Activated CD4-positive, alpha-beta memory T cell treated with anti-CD3 and anti-CD28 coated beads for 36 hours (primary cell): ENCODE measurements at regions of chr17 and their contacts with region 1.

Region 1: DNA sequence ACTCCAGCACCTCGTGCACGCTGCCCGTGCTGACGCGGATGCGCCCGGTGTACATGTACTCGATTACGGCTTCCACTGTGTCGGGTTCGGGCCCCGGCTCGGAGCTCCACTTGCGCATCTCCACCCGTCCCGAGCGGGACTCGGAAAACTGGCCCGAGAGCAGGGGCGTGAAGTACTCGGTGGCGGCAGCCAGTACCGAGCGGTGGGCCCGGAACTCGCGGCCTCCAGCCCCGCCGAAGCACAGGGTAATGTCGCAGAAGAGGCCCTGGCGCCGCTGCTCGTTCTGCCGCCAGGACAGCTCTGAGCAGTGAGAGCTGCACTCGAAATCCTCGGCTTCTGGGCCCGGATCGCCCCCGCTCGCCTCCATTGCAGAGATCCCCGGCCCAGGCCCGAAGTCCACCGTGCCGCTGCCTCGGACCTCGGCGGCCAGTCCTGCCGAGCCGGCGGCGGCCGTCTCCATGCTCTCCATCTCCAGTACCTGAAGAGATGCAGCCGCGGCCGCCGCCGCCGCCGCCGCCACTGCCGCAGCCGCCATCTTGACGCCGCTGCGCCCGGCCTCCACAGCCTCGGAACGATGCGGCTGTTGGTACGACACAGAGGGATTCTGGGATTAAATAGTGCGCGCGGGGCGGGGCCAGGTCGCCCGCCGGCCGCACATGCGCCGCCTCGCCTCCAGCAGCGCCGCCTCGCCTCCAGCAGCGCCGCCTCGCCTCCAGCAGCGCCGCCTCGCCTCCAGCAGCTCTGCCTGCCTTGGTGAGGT is at the start of gene KLHL11:
- DNase-seq: peak; percentile 93
- H3K4me3 Mint-ChIP-seq: no peak within 1 kb of the TSS
- H3K27ac Mint-ChIP-seq: peak within 1 kb of the TSS; percentile 80
- H3K4me1 Mint-ChIP-seq: peaks cover 45% of the 10 kb centered on the region
- H3K27me3 Mint-ChIP-seq: no peaks in the 10 kb centered on the region
- total RNA-seq, gene KLHL11: 23.6 to 25.2 TPM

Region 2: GRCh38 chr17:41688699-41689496 is 176.1 kb before region 1 on chr17 and contains the start of gene EIF1:
- CTCF ChIA-PET with region 1: interaction called, 3 read pairs
- POLR2A ChIA-PET with region 1: interaction called, 11 read pairs
- intact Hi-C with region 1: no loop called
- DNase-seq: peak; percentile 100
- H3K4me3 Mint-ChIP-seq: peak within 1 kb of the TSS; percentile 95
- H3K27ac Mint-ChIP-seq: peak within 1 kb of the TSS; percentile 99
- H3K4me1 Mint-ChIP-seq: peaks cover 35% of the 10 kb centered on the region
- H3K27me3 Mint-ChIP-seq: no peaks in the 10 kb centered on the region
- total RNA-seq, gene EIF1: 1,052 to 1,072 TPM

Region 3: GRCh38 chr17:41894791-41895331 is 29.8 kb after region 1 on chr17:
- CTCF ChIA-PET with region 1: no interaction called
- POLR2A ChIA-PET with region 1: no interaction called
- intact Hi-C with region 1: no loop called
- DNase-seq: no peak
- H3K4me3 Mint-ChIP-seq: no peak overlapping the region
- H3K27ac Mint-ChIP-seq: no peak overlapping the region
- H3K4me1 Mint-ChIP-seq: no peaks in the 10 kb centered on the region
- H3K27me3 Mint-ChIP-seq: no peaks in the 10 kb centered on the region

Region 4: GRCh38 chr17:41918314-41919164 is 53.5 kb after region 1 on chr17 and contains the start of gene ACLY:
- CTCF ChIA-PET with region 1: no interaction called
- POLR2A ChIA-PET with region 1: interaction called, 11 read pairs
- intact Hi-C with region 1: loop called (anchors 5 kb)
- DNase-seq: peak; percentile 98
- H3K4me3 Mint-ChIP-seq: peak within 1 kb of the TSS; percentile 95
- H3K27ac Mint-ChIP-seq: peak within 1 kb of the TSS; percentile 86
- H3K4me1 Mint-ChIP-seq: peaks cover 35% of the 10 kb centered on the region
- H3K27me3 Mint-ChIP-seq: no peaks in the 10 kb centered on the region
- total RNA-seq, gene ACLY: 186 to 203 TPM